Psoas muscle (tissue), 8 donors: ENCODE measurements at regions of chr10 and their contacts with region 1.

Region 1: GRCh38 chr10:97914837-97915211 is 65.2 kb downstream of the GOLGA7B start:
- DNase-seq: peak; percentile 72 to 89
- ATAC-seq: peak; percentile 87 to 95 (median 92)
- H3K4me3 ChIP-seq: peak overlapping the region; percentile 30
- H3K27ac ChIP-seq: no peak overlapping the region
- H3K4me1 ChIP-seq: peaks cover 9% of the 10 kb centered on the region
- H3K27me3 ChIP-seq: peaks cover 0 to 15% (median 0%) of the 10 kb centered on the region in 3 donors
- CTCF ChIP-seq: peak; percentile 90

Region 2: GRCh38 chr10:97961979-97962378 is 47.2 kb after region 1 on chr10:
- intact Hi-C with region 1: no loop called
- DNase-seq: no peak
- ATAC-seq: no peak
- H3K4me3 ChIP-seq: no peak overlapping the region
- H3K27ac ChIP-seq: no peak overlapping the region
- H3K4me1 ChIP-seq: no peaks in the 10 kb centered on the region
- H3K27me3 ChIP-seq: peaks cover 0 to 35% (median 6%) of the 10 kb centered on the region in 3 donors
- CTCF ChIP-seq: no peak

Region 3: GRCh38 chr10:98045785-98046389 is 131.1 kb after region 1 on chr10:
- intact Hi-C with region 1: loop called (anchors 2 kb)
- DNase-seq: peak; percentile 38 to 59
- ATAC-seq: peak; percentile 76 to 85 (median 80)
- H3K4me3 ChIP-seq: no peak overlapping the region
- H3K27ac ChIP-seq: no peak overlapping the region
- H3K4me1 ChIP-seq: no peaks in the 10 kb centered on the region
- H3K27me3 ChIP-seq: peaks cover 0 to 28% (median 2%) of the 10 kb centered on the region in 3 donors
- CTCF ChIP-seq: peak; percentile 83

Region 4: DNA sequence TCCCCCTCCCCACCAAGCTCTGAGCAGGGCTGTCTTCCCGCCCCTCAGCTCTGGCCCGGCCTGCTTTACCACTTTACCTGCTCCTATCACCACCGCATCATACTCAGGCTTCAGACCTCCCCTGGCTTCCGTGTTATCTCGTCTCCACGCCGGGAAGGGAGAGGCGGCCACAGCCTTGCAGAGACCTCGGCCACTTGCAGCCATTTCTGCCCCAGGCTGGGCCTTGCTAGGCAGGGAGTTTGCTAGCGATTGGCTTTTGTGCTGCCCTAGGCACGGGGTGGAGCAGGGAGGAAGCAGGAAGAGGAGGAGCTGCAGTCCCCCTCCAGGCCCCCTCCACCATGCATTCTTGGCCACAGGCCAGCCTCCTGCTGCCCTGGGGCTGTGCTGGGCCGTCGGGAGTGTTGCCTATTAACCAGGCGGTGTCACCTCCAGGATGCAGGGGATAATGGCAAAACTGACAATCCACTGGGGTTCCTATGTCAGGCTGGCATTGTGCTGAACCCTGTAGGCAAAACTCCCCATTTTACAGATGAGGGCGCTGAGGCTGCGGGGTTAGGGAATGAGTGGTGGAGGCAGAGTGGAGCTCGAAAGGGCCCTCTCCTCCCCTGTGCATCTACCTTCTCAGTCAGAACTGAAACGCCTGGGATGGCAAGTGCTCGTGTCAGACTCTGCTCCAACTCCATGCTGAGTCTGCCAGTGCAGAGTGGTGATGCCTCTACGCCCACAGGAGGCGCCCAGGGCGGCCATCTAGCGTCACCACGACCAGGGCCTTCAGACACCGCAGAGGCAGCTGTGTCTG is 500.3 kb after region 1 on chr10 and contains the start of gene PYROXD2:
- intact Hi-C with region 1: no loop called
- DNase-seq: peak; percentile 90 to 95
- ATAC-seq: peak; percentile 88 to 93 (median 90)
- H3K4me3 ChIP-seq: peak within 1 kb of the TSS; percentile 76
- H3K27ac ChIP-seq: peak within 1 kb of the TSS; percentile 67
- H3K4me1 ChIP-seq: peaks cover 17% of the 10 kb centered on the region
- H3K27me3 ChIP-seq: no peaks in the 10 kb centered on the region
- CTCF ChIP-seq: no peak
- total RNA-seq, gene PYROXD2: 1.7 to 13.2 (median 3.8) TPM